ENCODE measurements at regions of chr14 and their contacts with region 1.

Region 1: DNA sequence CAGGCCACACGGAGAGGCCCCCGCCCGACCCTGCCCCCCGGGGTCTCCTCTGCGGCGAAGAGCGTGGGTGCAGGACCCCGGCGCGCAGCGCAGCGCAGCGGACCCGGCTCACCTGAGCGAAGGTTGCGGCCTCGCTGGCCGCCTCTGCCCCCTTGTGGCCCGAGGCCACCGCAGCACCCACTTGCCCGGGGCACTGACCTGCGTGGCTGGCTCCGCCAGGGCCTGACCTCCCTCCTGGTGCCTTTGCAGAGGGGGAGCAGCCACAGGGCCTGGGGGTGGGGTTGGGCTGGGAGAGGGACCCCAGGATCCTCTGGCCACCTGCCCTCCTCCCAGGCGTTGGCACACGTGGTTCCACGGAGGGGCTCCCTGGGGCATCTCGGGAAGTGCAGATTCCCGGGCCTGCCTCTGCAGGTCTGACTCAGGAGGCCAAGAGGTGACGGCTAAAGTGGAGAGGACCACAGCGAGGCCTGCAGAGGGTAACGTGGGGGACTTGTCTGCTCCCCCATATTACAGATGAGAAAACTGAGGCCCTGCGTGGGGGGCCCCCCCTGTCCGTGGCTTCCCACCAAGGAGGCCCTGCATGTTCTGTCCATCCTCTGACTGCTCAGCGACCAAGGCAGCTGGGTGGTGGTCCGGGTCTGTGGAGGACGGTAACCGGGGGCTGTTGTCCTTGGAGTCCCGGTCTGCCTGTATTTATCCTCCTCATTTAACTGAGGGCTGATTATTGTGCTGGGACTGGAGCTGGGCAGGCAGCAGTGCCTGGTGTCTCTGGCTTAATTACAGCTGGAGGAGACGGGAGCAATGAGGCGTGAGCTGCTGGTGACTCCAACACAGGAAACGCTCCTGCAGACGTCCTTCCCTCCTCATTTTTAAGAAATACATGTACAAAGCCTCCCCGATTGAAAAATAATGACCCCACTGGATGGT is 67.9 kb upstream of the BEGAIN start:
- DNase-seq: peak in 7 of 9 experiments; percentile 29 to 66 (median 49)
- ATAC-seq: peak; percentile 65
- H3K4me3 ChIP-seq: no peak overlapping the region
- H3K4me3 Mint-ChIP-seq: no peak overlapping the region
- H3K27ac ChIP-seq: no peak overlapping the region
- H3K27ac Mint-ChIP-seq: no peak overlapping the region
- H3K4me1 ChIP-seq: no peaks in the 10 kb centered on the region
- H3K4me1 Mint-ChIP-seq: peaks cover 3% of the 10 kb centered on the region
- H3K27me3 ChIP-seq: peaks cover 5 to 8% of the 10 kb centered on the region in 2 experiments
- H3K27me3 Mint-ChIP-seq: peaks cover 27% of the 10 kb centered on the region
- CTCF ChIP-seq: peak; percentile 44

Region 2: GRCh38 chr14:100383727-100384158 is 271.3 kb before region 1 on chr14:
- CTCF ChIA-PET with region 1: interaction called, 100 read pairs
- POLR2A ChIA-PET with region 1: interaction called, 3 read pairs
- intact Hi-C with region 1: loop called (anchors 1 kb)
- DNase-seq: peak; percentile 38 to 79 (median 67)
- ATAC-seq: peak; percentile 93
- H3K4me3 ChIP-seq: no peak overlapping the region
- H3K4me3 Mint-ChIP-seq: no peak overlapping the region
- H3K27ac ChIP-seq: no peak overlapping the region
- H3K27ac Mint-ChIP-seq: no peak overlapping the region
- H3K4me1 ChIP-seq: peaks cover 10% of the 10 kb centered on the region
- H3K4me1 Mint-ChIP-seq: peaks cover 16% of the 10 kb centered on the region
- H3K27me3 ChIP-seq: no peaks in the 10 kb centered on the region
- H3K27me3 Mint-ChIP-seq: no peaks in the 10 kb centered on the region
- CTCF ChIP-seq: peak; percentile 82

Region 3: GRCh38 chr14:100440187-100440631 is 214.9 kb before region 1 on chr14:
- CTCF ChIA-PET with region 1: interaction called, 11 read pairs
- POLR2A ChIA-PET with region 1: no interaction called
- intact Hi-C with region 1: loop called in 1 of 2 experiments (anchors 2 kb)
- DNase-seq: peak in 7 of 9 experiments; percentile 10 to 58 (median 45)
- ATAC-seq: peak; percentile 40
- H3K4me3 ChIP-seq: no peak overlapping the region
- H3K4me3 Mint-ChIP-seq: no peak overlapping the region
- H3K27ac ChIP-seq: no peak overlapping the region
- H3K27ac Mint-ChIP-seq: no peak overlapping the region
- H3K4me1 ChIP-seq: no peaks in the 10 kb centered on the region
- H3K4me1 Mint-ChIP-seq: no peaks in the 10 kb centered on the region
- H3K27me3 ChIP-seq: no peaks in the 10 kb centered on the region
- H3K27me3 Mint-ChIP-seq: no peaks in the 10 kb centered on the region
- CTCF ChIP-seq: no peak

Region 4: DNA sequence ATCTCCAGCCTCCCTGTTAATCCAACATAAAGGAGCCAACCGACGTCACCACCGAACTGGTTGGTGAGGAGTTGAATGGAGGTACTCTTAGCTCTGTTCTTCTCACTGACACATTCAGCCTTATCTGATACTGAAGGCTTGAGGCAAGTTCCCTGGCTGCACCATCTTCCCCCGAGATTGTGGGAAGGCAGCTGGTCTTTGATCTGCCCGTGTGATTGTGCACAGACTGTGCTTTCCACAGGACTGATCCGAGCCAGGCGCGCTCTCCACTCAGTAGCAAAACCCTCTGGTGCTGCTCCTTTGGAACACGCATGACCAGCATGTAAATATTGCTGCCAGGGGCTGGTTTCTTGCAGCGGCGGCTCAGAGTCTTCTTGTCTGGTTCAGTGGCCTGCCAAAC is 41.5 kb after region 1 on chr14:
- CTCF ChIA-PET with region 1: no interaction called
- POLR2A ChIA-PET with region 1: no interaction called
- intact Hi-C with region 1: no loop called
- DNase-seq: no peak
- ATAC-seq: no peak
- H3K4me3 ChIP-seq: no peak overlapping the region
- H3K4me3 Mint-ChIP-seq: no peak overlapping the region
- H3K27ac ChIP-seq: no peak overlapping the region
- H3K27ac Mint-ChIP-seq: no peak overlapping the region
- H3K4me1 ChIP-seq: no peaks in the 10 kb centered on the region
- H3K4me1 Mint-ChIP-seq: no peaks in the 10 kb centered on the region
- H3K27me3 ChIP-seq: no peaks in the 10 kb centered on the region
- H3K27me3 Mint-ChIP-seq: peaks cover 22% of the 10 kb centered on the region
- CTCF ChIP-seq: no peak

Region 5: DNA sequence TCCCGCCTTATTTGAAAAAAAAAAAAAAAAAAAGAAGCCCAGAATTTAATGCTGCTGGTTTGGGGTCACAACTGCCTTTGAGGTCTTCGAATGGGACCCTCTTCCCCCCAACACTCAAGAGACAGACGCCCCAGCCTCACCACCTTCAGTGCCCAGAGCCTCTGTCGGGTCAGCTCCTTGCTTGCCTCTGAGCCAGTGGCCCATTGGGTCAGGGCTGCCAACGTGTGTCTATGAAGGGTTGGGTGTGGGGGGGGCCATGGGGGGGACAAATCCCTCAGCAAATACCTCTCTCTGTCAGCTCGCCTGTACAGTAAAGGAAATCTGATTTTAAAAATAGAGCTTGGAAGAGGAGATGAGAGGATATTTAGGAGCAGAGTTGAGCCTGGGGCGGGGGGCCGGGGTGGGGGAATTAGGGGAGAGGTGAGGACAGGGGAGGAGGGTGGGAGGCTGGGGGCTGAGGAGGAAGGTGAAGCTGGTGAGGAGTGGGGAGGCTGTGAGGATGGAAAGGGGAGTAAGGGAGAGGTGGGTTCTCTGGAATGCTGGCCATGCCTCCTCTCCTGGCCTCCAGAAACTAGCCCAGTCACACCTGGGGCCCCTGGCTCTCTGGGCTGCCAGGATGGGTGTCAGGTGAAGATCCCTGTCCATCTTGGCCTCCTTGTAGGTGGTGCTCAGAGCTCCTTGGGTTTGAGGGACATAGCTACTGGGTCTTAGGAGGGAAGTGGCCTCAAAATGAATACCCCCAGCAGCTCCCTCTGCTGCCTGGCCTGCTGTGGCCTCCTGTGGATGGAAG is 235.2 kb after region 1 on chr14:
- CTCF ChIA-PET with region 1: no interaction called
- POLR2A ChIA-PET with region 1: no interaction called
- intact Hi-C with region 1: no loop called
- DNase-seq: no peak
- ATAC-seq: no peak
- H3K4me3 ChIP-seq: no peak overlapping the region
- H3K4me3 Mint-ChIP-seq: no peak overlapping the region
- H3K27ac ChIP-seq: no peak overlapping the region
- H3K27ac Mint-ChIP-seq: no peak overlapping the region
- H3K4me1 ChIP-seq: no peaks in the 10 kb centered on the region
- H3K4me1 Mint-ChIP-seq: no peaks in the 10 kb centered on the region
- H3K27me3 ChIP-seq: peaks cover 0 to 2% of the 10 kb centered on the region in 2 experiments
- H3K27me3 Mint-ChIP-seq: peaks cover 7% of the 10 kb centered on the region
- CTCF ChIP-seq: no peak

Measured in CD8-positive, alpha-beta T cell (primary cell).